CD8-positive, alpha-beta T cell (primary cell): ENCODE measurements at regions of chr7 and their contacts with region 1.

Region 1: DNA sequence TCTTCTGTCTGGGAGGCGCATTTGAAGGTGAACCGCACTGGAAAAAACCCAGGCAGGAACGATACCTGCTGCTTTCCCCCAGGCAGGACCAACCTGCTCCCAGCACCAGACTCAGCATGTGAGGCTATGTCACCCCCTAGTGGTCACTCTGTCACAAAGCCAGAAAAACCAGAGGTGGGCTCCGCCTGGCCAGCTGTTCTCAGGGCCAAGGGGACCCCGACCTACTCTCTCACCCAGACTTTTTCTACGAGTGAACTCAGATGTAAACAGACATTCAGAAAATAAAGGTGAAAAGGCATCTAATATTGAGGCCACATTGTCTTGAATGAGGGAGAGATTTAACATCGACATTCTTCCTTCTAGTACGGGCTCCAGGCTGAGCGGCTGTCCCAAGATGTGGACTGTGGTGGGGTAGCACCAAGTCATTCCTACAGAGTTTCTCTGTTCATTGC is 117.3 kb downstream of the PRKAG2 start:
- DNase-seq: peak in 8 of 9 experiments; percentile 31 to 81 (median 66)
- ATAC-seq: peak; percentile 62
- H3K4me3 ChIP-seq: no peak overlapping the region
- H3K4me3 Mint-ChIP-seq: no peak overlapping the region
- H3K27ac ChIP-seq: no peak overlapping the region
- H3K27ac Mint-ChIP-seq: peak overlapping the region; percentile 41
- H3K4me1 ChIP-seq: peaks cover 25% of the 10 kb centered on the region
- H3K4me1 Mint-ChIP-seq: peaks cover 29% of the 10 kb centered on the region
- H3K27me3 ChIP-seq: no peaks in the 10 kb centered on the region
- H3K27me3 Mint-ChIP-seq: no peaks in the 10 kb centered on the region
- CTCF ChIP-seq: peak; percentile 95

Region 2: DNA sequence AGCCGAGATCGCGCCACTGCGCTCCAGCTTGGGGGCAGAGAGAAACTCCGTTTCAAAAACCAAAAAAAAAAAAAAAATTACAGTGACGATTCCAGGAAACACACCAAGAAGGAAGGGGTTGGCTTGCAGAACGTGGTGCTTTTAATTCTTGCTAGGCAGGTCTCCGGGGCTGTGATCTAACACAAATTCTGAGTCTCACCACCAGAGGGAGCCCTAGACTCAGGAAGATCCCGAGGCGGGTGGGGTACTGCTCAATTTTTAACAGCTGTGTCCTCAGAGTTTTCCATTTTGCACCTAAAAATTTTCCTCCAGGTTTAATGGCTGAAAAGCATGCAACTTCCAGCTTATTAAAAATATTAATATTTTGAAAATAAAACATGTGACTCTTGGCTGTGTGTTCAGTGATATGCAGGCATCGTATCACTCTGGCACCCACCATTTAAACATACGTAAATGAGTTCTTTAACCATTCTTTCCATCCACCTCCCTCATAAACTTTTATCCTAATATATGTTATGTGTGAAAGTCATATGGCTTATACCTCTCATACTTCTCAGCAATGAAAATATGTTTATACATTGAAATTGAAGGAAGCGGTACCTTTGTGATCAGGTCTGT is 444.5 kb before region 1 on chr7:
- CTCF ChIA-PET with region 1: interaction called, 8 read pairs
- POLR2A ChIA-PET with region 1: no interaction called
- intact Hi-C with region 1: loop called in 1 of 2 experiments (anchors 1 kb)
- DNase-seq: peak; percentile 63 to 89 (median 82)
- ATAC-seq: peak; percentile 95
- H3K4me3 ChIP-seq: no peak overlapping the region
- H3K4me3 Mint-ChIP-seq: no peak overlapping the region
- H3K27ac ChIP-seq: no peak overlapping the region
- H3K27ac Mint-ChIP-seq: no peak overlapping the region
- H3K4me1 ChIP-seq: peaks cover 4% of the 10 kb centered on the region
- H3K4me1 Mint-ChIP-seq: peaks cover 6% of the 10 kb centered on the region
- H3K27me3 ChIP-seq: peaks cover 0 to 4% of the 10 kb centered on the region in 2 experiments
- H3K27me3 Mint-ChIP-seq: no peaks in the 10 kb centered on the region
- CTCF ChIP-seq: peak; percentile 88

Region 3: DNA sequence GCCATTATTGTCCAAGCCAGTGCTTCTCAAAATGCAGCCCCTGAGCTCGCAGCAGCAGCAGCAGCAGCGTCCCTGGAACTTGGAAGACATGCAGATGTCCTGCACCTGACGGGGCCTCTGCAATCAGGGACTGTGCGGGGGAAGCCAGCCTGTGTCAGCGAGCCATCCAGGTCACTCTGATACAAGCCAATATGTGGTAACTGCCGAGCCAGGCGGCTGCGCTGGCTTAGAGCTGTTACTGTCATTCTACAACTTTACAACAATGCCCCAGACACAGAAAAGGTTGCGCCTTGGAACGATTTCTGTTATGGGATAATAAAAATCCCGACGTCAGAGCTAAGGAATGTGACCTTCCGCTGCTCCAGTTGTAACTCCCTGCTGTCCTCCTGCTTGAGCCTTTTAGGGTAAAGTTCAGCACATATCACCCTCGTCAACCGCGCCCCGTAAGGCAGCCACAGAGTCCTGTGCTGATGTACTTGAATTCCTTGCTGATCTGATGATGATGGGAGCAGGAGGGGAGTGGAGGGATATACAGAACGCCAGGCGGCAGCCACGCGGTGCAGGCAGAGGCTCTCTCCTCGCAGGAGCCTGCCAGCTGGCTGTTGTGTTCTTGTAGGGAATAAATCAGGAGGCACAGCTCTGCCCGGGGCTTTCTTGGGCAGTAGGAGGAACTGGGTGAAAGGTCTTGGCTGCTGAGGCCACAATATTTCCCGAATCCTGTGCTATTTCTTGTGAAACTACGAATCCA is 299.7 kb before region 1 on chr7:
- CTCF ChIA-PET with region 1: no interaction called
- POLR2A ChIA-PET with region 1: no interaction called
- intact Hi-C with region 1: loop called in 1 of 2 experiments (anchors 10 kb)
- DNase-seq: no peak
- ATAC-seq: no peak
- H3K4me3 ChIP-seq: no peak overlapping the region
- H3K4me3 Mint-ChIP-seq: no peak overlapping the region
- H3K27ac ChIP-seq: no peak overlapping the region
- H3K27ac Mint-ChIP-seq: no peak overlapping the region
- H3K4me1 ChIP-seq: no peaks in the 10 kb centered on the region
- H3K4me1 Mint-ChIP-seq: peaks cover 5% of the 10 kb centered on the region
- H3K27me3 ChIP-seq: no peaks in the 10 kb centered on the region
- H3K27me3 Mint-ChIP-seq: peaks cover 7% of the 10 kb centered on the region
- CTCF ChIP-seq: no peak

Region 4: DNA sequence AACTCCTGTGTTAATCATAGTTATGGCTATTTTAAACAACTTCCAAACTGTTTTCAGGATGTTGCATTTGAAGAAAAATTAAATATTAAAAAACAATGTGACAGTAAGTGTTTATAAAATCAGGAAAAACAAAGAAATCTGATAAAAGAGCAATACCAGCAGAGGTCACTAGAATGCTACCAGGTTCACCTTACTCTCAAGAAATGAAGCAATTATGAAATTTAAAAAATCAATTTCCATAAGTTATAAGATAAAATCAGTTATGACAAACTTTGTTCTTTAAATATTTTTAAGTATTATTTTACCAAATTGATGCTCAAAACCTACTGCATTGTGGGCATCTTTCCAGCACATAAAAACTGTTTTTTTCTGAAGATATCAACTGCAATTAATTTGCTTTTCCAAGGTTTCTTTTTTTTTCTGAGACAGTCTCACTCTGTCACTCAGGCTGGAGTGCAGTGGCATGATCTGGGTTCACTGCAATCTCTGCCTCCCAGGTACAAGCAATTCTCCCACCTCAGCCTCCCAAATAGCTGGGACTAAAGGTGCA is 189.2 kb before region 1 on chr7:
- CTCF ChIA-PET with region 1: interaction called, 3 read pairs
- POLR2A ChIA-PET with region 1: no interaction called
- intact Hi-C with region 1: loop called (anchors 1 kb)
- DNase-seq: peak in 2 of 9 experiments; percentile 13 to 35
- ATAC-seq: no peak
- H3K4me3 ChIP-seq: no peak overlapping the region
- H3K4me3 Mint-ChIP-seq: no peak overlapping the region
- H3K27ac ChIP-seq: no peak overlapping the region
- H3K27ac Mint-ChIP-seq: no peak overlapping the region
- H3K4me1 ChIP-seq: no peaks in the 10 kb centered on the region
- H3K4me1 Mint-ChIP-seq: no peaks in the 10 kb centered on the region
- H3K27me3 ChIP-seq: no peaks in the 10 kb centered on the region
- H3K27me3 Mint-ChIP-seq: no peaks in the 10 kb centered on the region
- CTCF ChIP-seq: no peak

Region 5: GRCh38 chr7:151631968-151632749 is 127.5 kb before region 1 on chr7:
- CTCF ChIA-PET with region 1: interaction called, 19 read pairs
- POLR2A ChIA-PET with region 1: interaction called, 8 read pairs
- intact Hi-C with region 1: loop called in 1 of 2 experiments (anchors 2 kb)
- DNase-seq: peak; percentile 72 to 95 (median 87)
- ATAC-seq: peak; percentile 82
- H3K4me3 ChIP-seq: peak overlapping the region; percentile 68 to 85
- H3K4me3 Mint-ChIP-seq: peak overlapping the region; percentile 98
- H3K27ac ChIP-seq: peak overlapping the region; percentile 68 to 82
- H3K27ac Mint-ChIP-seq: peak overlapping the region; percentile 98
- H3K4me1 ChIP-seq: peaks cover 18% of the 10 kb centered on the region
- H3K4me1 Mint-ChIP-seq: peaks cover 39% of the 10 kb centered on the region
- H3K27me3 ChIP-seq: no peaks in the 10 kb centered on the region
- H3K27me3 Mint-ChIP-seq: no peaks in the 10 kb centered on the region
- CTCF ChIP-seq: no peak

Region 6: DNA sequence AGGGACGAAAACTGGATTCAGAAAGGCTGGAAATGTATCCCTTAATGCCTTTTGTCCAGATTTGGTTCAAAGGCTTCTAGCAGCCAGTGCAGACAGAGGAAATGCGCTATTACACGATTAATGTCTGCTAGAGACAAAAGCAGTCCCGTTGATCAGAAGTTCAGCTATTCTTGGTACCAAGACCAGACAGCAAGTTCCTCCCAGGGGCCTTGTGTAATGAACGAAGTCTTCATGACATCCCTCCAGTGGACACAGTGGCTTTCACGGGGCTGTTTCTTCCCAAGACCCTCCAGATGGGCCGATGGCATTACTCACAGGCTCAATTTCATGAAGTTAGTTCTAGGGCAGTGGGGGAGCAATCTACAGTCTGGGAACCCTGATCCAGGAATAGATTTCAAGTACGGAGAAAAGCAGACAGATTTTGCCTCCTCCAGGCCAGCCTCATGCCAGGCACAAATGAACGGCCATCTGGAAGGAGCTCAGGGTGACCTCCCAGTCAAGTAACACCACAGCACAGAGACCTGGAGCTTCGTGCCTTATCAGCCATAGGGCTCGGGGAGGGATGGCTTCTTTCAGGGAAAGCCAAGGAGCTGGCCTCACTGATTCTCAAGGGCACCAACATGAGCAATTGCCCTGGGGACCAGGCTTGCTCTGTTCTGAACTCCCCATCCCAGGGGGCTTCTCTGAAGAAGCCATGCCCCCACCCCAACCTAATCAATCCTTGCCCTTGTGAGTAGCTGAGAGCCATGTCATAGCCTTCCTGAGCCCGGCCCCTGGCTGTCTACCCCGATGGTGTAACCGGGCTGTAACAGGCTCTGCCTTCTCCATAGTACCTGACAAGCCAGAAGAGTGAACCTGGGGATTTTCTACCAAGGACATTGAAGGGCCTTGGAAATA is 16.2 kb after region 1 on chr7:
- CTCF ChIA-PET with region 1: interaction called, 41 read pairs
- POLR2A ChIA-PET with region 1: no interaction called
- intact Hi-C with region 1: loop called in 1 of 2 experiments (anchors 2 kb)
- DNase-seq: no peak
- ATAC-seq: no peak
- H3K4me3 ChIP-seq: no peak overlapping the region
- H3K4me3 Mint-ChIP-seq: no peak overlapping the region
- H3K27ac ChIP-seq: no peak overlapping the region
- H3K27ac Mint-ChIP-seq: no peak overlapping the region
- H3K4me1 ChIP-seq: peaks cover 12% of the 10 kb centered on the region
- H3K4me1 Mint-ChIP-seq: peaks cover 18% of the 10 kb centered on the region
- H3K27me3 ChIP-seq: no peaks in the 10 kb centered on the region
- H3K27me3 Mint-ChIP-seq: no peaks in the 10 kb centered on the region
- CTCF ChIP-seq: no peak